ENCODE measurements at regions of chr12 and their contacts with region 1.

Region 1: DNA sequence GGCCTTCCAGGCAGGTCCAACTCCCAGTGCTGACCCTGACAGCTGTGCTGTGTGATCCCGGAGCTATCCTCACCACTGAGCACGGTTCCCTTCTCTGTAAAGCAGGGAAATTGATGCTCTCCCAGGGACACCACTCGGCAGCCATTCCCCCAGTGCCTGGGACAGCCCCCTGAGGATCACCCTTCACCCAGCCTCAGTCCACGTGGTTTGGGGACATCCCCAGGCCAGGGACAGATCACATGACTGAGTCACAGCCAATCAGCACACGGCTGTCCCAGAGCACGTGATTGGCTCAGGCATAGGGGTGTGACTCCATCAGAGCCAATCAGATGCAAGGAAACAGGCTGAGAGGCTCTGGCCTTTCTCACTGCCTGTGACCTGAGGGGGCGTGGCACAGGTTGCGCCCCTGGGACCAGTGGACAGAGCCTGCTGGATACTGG is 68.8 kb upstream of the SFSWAP start:
- DNase-seq: peak; percentile 71 to 95 (median 92)
- ATAC-seq: peak; percentile 96
- H3K4me3 ChIP-seq: no peak overlapping the region
- H3K27ac ChIP-seq: no peak overlapping the region
- H3K4me1 ChIP-seq: peaks cover 22 to 24% of the 10 kb centered on the region in 2 experiments; a peak in 4 of 5 replicates
- H3K27me3 ChIP-seq: peaks cover 0 to 6% of the 10 kb centered on the region in 2 experiments; a peak in 2 of 5 replicates
- CTCF ChIP-seq: no peak
- EP300 ChIP-seq: no peak
- POLR2A ChIP-seq: no peak
- RAD21 ChIP-seq: no peak

Region 2: GRCh38 chr12:131311764-131312163 is 330.4 kb before region 1 on chr12:
- CTCF ChIA-PET with region 1: no interaction called
- POLR2A ChIA-PET with region 1: no interaction called
- in situ Hi-C with region 1: loop called (anchors 5 kb)
- intact Hi-C with region 1: loop called (anchors 5 kb)
- DNase-seq: no peak
- ATAC-seq: no peak
- H3K4me3 ChIP-seq: no peak overlapping the region
- H3K27ac ChIP-seq: no peak overlapping the region
- H3K4me1 ChIP-seq: no peaks in the 10 kb centered on the region
- H3K27me3 ChIP-seq: peaks cover 8 to 16% of the 10 kb centered on the region in 2 experiments; a peak in 4 of 5 replicates
- CTCF ChIP-seq: no peak
- EP300 ChIP-seq: no peak
- POLR2A ChIP-seq: no peak
- RAD21 ChIP-seq: no peak

Measured in K562 (cell line).